H1 (cell line): ENCODE measurements at regions of chr3 and their contacts with region 1.

Region 1: DNA sequence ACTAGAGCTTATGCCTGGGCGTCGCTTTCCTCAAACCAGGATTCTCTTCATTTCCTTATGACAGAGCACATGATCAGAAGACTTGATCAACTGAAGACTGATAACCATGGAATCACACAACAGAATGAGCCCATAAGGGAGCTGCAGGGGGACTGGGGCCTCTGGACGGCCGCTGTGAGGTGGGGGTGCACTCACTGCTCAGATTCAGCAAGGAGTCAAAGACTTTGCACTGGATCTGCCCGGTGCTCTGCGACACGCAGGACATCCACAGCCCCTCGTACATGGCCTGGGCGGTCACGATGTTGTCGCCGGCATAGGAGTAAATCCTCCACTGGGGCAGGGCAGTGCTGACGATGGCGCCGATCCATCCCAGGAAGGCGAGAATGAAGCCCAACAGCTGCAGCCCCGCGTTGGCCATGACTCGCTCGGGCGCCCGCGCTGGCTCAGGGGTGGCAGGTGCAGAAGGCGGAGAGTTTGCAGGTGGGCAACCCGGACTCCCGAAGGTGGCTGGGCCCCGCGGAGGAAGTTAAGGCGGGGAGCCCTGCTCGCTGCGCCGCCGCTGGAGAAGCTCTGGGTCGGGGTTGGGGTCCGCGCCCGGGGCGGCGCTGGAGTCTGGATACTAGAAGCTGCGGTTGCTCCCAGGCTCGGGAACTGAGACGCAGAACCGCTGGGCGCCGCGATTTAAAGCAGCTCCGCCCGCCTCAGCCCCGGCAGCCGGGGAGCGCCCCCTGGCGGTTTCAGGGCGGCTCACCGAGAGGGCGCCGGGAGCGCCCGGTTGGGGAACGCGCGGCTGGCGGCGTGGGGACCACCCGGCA is at the start of gene CLDN1:
- DNase-seq: peak; percentile 73 to 95
- H3K4me3 ChIP-seq: peak within 1 kb of the TSS; percentile 76 to 79 (median 78)
- H3K27ac ChIP-seq: no peak within 1 kb of the TSS; the same call in 1 of the 2 replicates
- H3K4me1 ChIP-seq: peaks cover 2 to 13% (median 8%) of the 10 kb centered on the region in 4 experiments; a peak in 5 of 7 replicates
- H3K27me3 ChIP-seq: peaks cover 0 to 7% (median 6%) of the 10 kb centered on the region in 4 experiments; a peak in 5 of 7 replicates
- CTCF ChIP-seq: peak; percentile 74 to 98 (median 84)
- EP300 ChIP-seq: peak in 1 of 2 experiments; percentile 38; a peak in 1 of 3 replicates
- POLR2A ChIP-seq: peak in 1 of 2 experiments; percentile 85; a peak in 2 of 3 replicates
- RAD21 ChIP-seq: peak; percentile 76 to 87
- total RNA-seq, gene CLDN1: 3.0 and 3.1 TPM in 2 replicates

Region 2: DNA sequence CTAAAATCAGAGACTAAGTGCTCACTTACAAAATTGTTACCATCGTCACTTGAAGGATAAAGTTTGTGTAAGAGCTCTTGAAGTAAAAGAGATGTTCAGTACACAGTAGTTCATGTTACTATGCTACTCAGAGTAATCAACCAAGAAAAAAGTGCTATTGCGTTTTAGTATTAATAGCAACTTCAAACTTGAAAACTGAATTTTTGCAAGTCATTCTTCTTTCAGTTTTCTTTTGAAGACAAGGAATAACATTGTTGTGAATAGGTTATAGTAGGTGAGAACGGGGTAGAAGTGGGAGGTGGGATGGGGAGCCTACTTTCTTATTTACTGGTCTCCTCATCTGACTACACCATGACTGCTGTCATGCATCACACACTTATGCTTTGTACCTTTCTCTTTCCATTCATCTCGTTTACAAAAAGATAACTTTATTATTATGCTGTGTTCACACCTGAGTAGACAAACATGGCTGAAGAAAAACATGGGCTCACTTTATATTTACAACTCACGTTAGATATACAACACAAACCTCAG is 162.0 kb before region 1 on chr3:
- CTCF ChIA-PET with region 1: no interaction called
- POLR2A ChIA-PET with region 1: no interaction called
- DNase-seq: no peak
- H3K4me3 ChIP-seq: no peak overlapping the region
- H3K27ac ChIP-seq: no peak overlapping the region
- H3K4me1 ChIP-seq: no peaks in the 10 kb centered on the region
- H3K27me3 ChIP-seq: no peaks in the 10 kb centered on the region
- CTCF ChIP-seq: no peak
- EP300 ChIP-seq: no peak
- POLR2A ChIP-seq: no peak
- RAD21 ChIP-seq: no peak

Region 3: DNA sequence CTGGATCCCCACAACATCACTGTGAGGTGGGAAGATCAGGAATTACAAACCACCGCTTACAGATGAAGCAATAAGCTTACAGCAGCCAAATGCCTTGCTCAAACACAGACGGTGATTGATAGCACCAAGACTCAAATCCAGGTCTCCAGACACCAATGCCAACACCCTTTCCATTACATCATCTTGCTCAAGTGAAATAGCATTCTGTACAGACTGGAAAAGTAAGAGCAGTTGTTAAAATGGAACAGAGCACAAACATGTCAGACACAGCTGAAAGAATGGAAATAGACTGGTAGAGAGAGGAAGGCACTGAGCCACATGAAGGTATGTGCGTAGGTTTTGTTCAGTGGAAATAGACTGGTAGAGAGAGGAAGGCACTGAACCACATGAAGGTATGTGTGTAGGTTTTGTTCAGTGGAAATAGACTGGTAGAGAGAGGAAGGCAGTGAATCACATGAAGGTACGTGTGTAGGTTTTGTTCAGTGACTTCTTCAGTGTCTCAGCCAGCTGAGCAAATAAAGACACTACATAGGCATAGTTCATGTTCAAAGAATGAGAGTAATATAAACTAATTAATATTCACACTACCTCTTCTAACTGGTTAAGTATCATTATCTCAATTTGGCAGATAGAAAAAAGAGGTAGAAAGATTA is 15.4 kb before region 1 on chr3:
- CTCF ChIA-PET with region 1: interaction called, 10 read pairs
- POLR2A ChIA-PET with region 1: interaction called, 4 read pairs
- DNase-seq: no peak
- H3K4me3 ChIP-seq: no peak overlapping the region
- H3K27ac ChIP-seq: no peak overlapping the region
- H3K4me1 ChIP-seq: no peaks in the 10 kb centered on the region
- H3K27me3 ChIP-seq: no peaks in the 10 kb centered on the region
- CTCF ChIP-seq: no peak
- EP300 ChIP-seq: no peak
- POLR2A ChIP-seq: no peak
- RAD21 ChIP-seq: no peak

Region 4: GRCh38 chr3:190339130-190339529 is 17.1 kb after region 1 on chr3:
- CTCF ChIA-PET with region 1: interaction called, 36 read pairs
- POLR2A ChIA-PET with region 1: no interaction called
- DNase-seq: no peak
- H3K4me3 ChIP-seq: no peak overlapping the region
- H3K27ac ChIP-seq: no peak overlapping the region
- H3K4me1 ChIP-seq: no peaks in the 10 kb centered on the region
- H3K27me3 ChIP-seq: no peaks in the 10 kb centered on the region
- CTCF ChIP-seq: peak in 1 of 3 experiments; percentile 11; a peak in 2 of 4 replicates
- EP300 ChIP-seq: no peak
- POLR2A ChIP-seq: no peak
- RAD21 ChIP-seq: peak; percentile 5 to 19; a peak in 1 of 4 replicates

Region 5: GRCh38 chr3:190384241-190384863 is 62.4 kb after region 1 on chr3:
- CTCF ChIA-PET with region 1: interaction called, 10 read pairs
- POLR2A ChIA-PET with region 1: no interaction called
- DNase-seq: no peak
- H3K4me3 ChIP-seq: no peak overlapping the region
- H3K27ac ChIP-seq: no peak overlapping the region
- H3K4me1 ChIP-seq: peaks cover 0 to 3% (median 0%) of the 10 kb centered on the region in 4 experiments; a peak in 1 of 7 replicates
- H3K27me3 ChIP-seq: no peaks in the 10 kb centered on the region
- CTCF ChIP-seq: peak in 2 of 3 experiments; percentile 46 to 48; a peak in 3 of 4 replicates
- EP300 ChIP-seq: no peak
- POLR2A ChIP-seq: no peak
- RAD21 ChIP-seq: peak; percentile 72 to 74